Cardiac septum (tissue), 1 donor: ENCODE measurements at regions of chr6 and their contacts with region 1.

Region 1: DNA sequence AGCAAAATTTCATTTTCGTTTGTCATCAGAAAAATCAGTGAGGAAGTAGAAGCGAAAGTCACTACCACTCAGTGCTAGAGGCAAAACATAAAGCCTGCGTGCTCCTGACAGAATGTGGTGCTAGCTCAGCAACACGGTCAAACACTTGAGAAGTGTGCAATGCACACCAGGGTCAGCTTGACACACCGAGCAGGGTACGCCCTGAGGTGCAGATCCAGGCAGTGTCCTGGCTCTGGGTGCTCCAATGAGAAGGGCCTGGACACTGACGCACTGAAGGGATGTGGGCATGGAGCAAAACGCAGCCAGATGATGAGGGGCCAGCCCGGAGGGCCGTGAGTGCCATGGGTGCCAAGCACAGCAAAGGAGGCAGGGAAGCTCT is 5.9 kb downstream of the RNASET2 start:
- DNase-seq: no peak

Region 2: DNA sequence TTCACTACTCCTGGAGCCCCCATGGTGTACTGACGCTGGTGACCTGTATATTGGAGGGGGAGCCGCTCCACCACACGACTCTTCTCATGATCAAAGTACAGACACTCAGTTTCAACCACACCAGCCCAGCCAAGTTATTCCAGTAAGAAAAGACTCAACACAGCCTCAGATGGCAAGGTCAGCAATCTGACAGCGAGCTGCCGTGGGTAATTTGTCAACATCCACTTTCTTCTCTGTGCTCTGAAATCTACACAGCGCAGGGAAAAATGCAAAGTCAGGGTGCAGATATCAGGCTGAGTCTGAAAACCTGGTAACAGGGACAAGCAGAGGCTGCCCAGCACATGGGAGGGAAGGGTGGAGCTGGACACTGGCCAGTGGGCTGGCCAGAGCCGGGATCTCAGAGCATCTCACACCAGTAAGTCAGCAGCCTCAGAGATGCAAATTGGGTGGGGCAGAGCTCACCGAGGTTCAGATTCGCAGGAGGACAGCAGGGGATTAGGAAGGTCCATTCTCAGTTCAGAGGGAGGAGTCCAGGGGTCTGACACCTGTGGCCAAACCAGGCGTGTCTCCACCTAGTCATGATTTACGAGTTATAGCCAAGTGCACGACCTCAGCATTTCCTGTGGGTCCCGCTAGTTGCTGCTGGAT is 278.9 kb before region 1 on chr6:
- intact Hi-C with region 1: no loop called
- DNase-seq: no peak

Region 3: DNA sequence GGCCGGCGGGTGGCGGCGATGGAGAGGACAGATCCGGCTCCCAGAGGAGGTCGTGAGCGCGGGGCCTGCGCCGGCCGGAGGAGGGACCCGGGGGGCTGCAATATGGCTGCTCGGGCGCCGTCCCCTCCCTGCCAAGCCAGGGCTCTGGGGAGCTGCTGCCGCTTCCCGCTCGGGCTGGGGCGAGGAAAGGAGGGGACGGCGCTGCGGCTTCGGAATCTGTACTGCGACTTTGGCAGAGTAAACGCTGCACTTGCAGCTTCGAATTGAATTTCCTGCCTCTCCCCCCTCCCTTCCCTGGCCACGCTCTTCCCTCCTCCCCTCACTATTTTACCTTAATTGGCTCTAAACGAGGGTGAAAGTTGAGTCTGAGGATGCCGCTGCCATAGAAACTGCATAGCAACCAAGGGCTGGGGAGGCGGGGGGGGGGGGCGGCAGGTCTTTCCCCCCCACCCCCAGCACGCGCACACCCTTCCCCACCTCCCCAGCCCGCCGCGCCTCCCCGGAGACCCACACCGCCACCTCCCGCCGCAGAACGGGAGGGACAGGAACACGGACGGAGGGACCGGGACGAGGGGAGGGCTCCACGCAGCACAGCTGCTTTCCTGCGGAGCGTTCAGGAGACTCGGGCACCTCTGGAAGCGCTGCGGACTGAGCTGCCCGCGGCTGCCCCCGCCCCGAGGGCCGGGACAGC is 88.0 kb before region 1 on chr6:
- intact Hi-C with region 1: loop called (anchors 5 kb)
- DNase-seq: no peak